Activated CD8-positive, alpha-beta memory T cell treated with anti-CD3 and anti-CD28 coated beads, Interleukin-2, amount 10 ng/mL, durations not matched to agents 7 days and 5 days (primary cell): ENCODE measurements at regions of chr5 and their contacts with region 1.

Region 1: GRCh38 chr5:170267431-170268152 is 30.0 kb downstream of the LCP2 start:
- DNase-seq: peak; percentile 90
- ATAC-seq: peak; percentile 45
- H3K4me3 Mint-ChIP-seq: peak overlapping the region; percentile 61
- H3K27ac Mint-ChIP-seq: peak overlapping the region; percentile 87
- H3K4me1 Mint-ChIP-seq: peaks cover 96% of the 10 kb centered on the region
- H3K27me3 Mint-ChIP-seq: no peaks in the 10 kb centered on the region

Region 2: GRCh38 chr5:170247363-170247762 is 20.2 kb before region 1 on chr5:
- CTCF ChIA-PET with region 1: interaction called, 15 read pairs
- DNase-seq: no peak
- ATAC-seq: no peak
- H3K4me3 Mint-ChIP-seq: no peak overlapping the region
- H3K27ac Mint-ChIP-seq: no peak overlapping the region
- H3K4me1 Mint-ChIP-seq: peaks cover 29% of the 10 kb centered on the region
- H3K27me3 Mint-ChIP-seq: no peaks in the 10 kb centered on the region

Region 3: GRCh38 chr5:170278611-170279452 is 11.2 kb after region 1 on chr5:
- CTCF ChIA-PET with region 1: interaction called, 49 read pairs
- DNase-seq: peak; percentile 98
- ATAC-seq: peak; percentile 76
- H3K4me3 Mint-ChIP-seq: peak overlapping the region; percentile 65
- H3K27ac Mint-ChIP-seq: peak overlapping the region; percentile 88
- H3K4me1 Mint-ChIP-seq: peaks cover 92% of the 10 kb centered on the region
- H3K27me3 Mint-ChIP-seq: no peaks in the 10 kb centered on the region

Region 4: DNA sequence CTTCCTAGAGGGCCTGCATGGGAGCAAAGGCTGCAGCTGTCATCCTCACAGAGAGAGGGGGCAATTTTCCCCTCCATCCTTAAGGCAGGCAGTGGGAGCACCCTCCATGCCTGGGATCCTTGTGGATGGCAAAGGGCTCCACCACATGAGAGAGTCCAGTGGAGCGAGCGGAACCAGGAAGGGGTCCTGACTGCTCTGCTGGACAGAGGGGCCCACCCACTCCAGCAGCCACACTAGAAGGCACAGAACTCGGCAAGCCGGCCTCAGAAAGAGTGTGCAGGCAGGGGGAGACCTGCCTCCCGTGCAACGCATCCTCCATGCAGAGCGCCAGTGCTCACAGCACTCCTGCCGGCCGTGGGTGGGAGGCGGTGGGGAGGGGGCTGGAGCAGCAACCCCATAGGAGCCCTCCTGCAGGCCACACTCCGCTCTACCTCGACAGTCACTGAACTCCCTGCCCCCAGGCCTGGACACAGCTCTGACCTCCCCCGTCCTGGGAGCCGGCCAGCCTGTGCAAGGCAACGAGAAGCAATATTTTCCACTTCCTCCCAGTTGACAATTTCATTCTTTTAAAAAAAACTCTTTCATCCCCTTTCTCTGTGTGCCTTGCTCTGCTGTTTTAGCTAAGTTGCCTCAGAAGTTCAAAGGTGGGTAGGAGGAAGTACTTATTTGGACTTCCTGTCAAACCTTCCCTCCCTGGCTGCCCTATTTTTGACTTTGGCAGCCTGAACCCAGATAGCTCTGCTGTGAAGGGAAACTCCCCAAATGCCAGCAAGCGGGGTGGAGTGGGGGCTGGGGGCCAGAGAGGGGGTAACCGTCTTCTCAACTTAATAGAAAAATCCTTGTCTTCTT is 35.3 kb after region 1 on chr5:
- CTCF ChIA-PET with region 1: interaction called, 499 read pairs
- DNase-seq: peak; percentile 71
- ATAC-seq: peak; percentile 94
- H3K4me3 Mint-ChIP-seq: peak overlapping the region; percentile 62
- H3K27ac Mint-ChIP-seq: peak overlapping the region; percentile 94
- H3K4me1 Mint-ChIP-seq: peaks cover 66% of the 10 kb centered on the region
- H3K27me3 Mint-ChIP-seq: no peaks in the 10 kb centered on the region